ENCODE measurements at regions of chr7 and their contacts with region 1.

Region 1: GRCh38 chr7:2645274-2645868 is 13.6 kb downstream of the TTYH3 start:
- DNase-seq: peak; percentile 89
- H3K4me3 ChIP-seq: peak overlapping the region; percentile 67
- H3K27ac ChIP-seq: peak overlapping the region; percentile 90
- H3K4me1 ChIP-seq: peaks cover 64% of the 10 kb centered on the region
- CTCF ChIP-seq: no peak

Region 2: GRCh38 chr7:1638215-1638661 is 1007.1 kb before region 1 on chr7:
- CTCF ChIA-PET with region 1: no interaction called
- POLR2A ChIA-PET with region 1: no interaction called
- intact Hi-C with region 1: no loop called
- DNase-seq: no peak
- H3K4me3 ChIP-seq: no peak overlapping the region
- H3K27ac ChIP-seq: no peak overlapping the region
- H3K4me1 ChIP-seq: no peaks in the 10 kb centered on the region
- CTCF ChIP-seq: no peak

Region 3: GRCh38 chr7:2555121-2556052 is 90.0 kb before region 1 on chr7 and contains the start of gene BRAT1:
- CTCF ChIA-PET with region 1: no interaction called
- POLR2A ChIA-PET with region 1: interaction called, 4 read pairs
- intact Hi-C with region 1: loop called (anchors 1 kb)
- DNase-seq: peak; percentile 97
- H3K4me3 ChIP-seq: peak within 1 kb of the TSS; percentile 76
- H3K27ac ChIP-seq: peak within 1 kb of the TSS; percentile 82
- H3K4me1 ChIP-seq: peaks cover 44% of the 10 kb centered on the region
- CTCF ChIP-seq: peak; percentile 62
- total RNA-seq, gene BRAT1: 50.8 and 52.0 TPM in 2 replicates

Region 4: DNA sequence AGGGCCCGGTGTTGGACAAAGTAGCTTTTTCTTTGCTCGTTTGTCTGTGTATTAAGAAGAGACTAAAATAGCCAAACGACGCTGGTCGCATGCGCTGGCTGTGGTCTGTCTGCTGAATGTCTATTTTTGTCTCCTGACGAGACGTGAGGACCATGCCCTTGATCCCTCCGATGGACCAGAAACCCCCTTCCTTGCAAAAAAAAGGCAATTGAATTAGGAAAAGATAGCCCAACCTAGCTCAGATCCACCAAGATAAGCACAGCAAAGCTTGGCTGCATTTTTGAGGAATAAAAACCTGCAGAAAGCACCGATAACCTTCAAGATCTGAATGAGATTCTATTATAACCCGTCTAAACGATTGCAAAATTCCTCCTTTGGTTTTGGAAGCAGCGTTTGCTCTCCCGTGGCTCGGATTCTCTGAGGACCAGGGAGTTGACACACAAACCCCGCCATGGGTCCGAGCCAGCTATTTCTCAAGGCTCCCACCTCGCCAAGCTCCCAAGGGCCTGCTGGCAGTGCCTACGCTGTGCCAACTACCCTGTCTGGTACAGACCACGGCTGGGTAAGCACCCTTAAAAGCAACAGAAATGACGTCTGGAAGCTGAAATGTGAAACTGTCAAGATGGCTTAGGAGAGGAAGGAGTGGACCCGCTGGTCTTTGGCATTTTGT is 31.3 kb before region 1 on chr7:
- CTCF ChIA-PET with region 1: no interaction called
- POLR2A ChIA-PET with region 1: interaction called, 3 read pairs
- intact Hi-C with region 1: loop called (anchors 2 kb)
- DNase-seq: peak; percentile 26
- H3K4me3 ChIP-seq: no peak overlapping the region
- H3K27ac ChIP-seq: no peak overlapping the region
- H3K4me1 ChIP-seq: peaks cover 26% of the 10 kb centered on the region
- CTCF ChIP-seq: no peak

Region 5: DNA sequence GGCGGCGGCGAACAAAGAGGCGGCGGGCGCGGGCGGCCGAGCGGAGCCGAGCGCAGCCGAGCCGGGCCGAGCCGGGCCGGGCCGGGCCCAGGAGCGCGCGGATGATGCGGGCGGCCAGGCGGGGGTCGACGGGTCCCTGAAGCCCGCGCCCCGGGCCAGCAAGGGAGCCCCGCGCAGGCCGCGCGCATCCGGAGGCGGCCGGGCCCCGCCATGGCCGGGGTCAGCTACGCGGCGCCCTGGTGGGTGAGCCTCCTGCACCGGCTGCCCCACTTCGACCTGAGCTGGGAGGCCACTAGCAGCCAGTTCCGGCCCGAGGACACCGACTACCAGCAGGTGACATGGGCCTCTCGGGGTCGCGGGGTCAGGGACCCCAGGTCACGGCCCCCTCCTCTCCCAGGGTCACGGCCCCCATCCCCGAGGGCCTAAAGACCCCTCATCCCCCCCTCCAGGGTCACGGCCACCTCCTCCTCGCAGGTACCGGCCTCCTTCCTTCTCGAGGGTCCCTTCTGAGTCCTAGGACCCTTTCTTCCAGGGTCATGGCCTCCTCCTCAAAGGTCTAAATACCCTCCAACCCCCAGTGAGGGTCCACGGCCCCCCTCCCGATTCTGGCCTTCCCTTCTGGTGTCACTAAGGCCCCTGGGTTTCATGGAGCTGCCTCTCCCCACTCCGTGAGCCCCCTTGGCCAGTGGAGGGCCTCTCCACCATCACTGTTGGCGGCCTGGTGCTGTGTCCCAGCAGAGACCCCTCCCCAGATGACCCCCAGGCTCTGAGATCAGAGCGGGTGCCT is 13.2 kb before region 1 on chr7 and contains the start of gene TTYH3:
- CTCF ChIA-PET with region 1: interaction called, 10 read pairs
- POLR2A ChIA-PET with region 1: interaction called, 13 read pairs
- intact Hi-C with region 1: no loop called
- DNase-seq: no peak
- H3K4me3 ChIP-seq: peak within 1 kb of the TSS; percentile 82
- H3K27ac ChIP-seq: no peak within 1 kb of the TSS
- H3K4me1 ChIP-seq: peaks cover 26% of the 10 kb centered on the region
- CTCF ChIP-seq: no peak
- total RNA-seq, gene TTYH3: 17.9 and 23.8 TPM in 2 replicates

Region 6: DNA sequence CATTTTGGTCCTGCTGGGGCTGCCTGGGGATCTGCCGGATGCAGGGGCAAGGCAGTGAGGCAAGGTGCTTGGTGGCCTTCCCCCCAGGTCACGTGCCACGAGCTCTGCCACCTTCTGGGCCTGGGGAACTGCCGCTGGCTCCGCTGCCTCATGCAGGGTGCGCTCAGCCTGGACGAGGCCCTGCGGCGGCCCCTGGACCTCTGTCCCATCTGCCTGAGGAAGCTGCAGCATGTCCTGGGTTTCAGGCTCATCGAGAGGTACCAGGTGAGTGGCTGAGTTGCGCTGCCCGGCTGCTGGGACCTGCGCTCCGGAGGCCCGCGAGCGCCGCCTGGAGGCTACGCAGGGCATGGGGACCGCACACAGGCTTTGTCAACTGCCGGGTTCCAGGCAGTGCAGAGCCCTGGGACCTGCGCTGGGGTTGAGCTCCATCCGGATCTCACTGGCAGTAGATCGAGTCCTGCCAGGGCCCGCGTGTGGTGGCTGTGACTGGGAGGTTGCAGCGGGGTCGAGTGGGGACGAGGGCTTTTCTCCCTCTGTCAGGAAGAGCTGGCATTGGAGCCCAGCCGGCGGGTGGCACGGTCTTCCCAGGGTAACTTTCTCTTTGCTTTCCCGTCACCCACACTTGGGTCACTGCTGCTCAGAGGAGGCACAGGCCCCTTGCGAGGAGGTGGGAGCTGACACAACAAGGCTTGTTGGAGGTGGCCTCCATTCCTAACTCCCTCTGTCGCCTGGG is 64.3 kb after region 1 on chr7:
- CTCF ChIA-PET with region 1: interaction called, 10 read pairs
- POLR2A ChIA-PET with region 1: interaction called, 11 read pairs
- intact Hi-C with region 1: loop called (anchors 2 kb)
- DNase-seq: peak; percentile 92
- H3K4me3 ChIP-seq: peak overlapping the region; percentile 64
- H3K27ac ChIP-seq: peak overlapping the region; percentile 81
- H3K4me1 ChIP-seq: peaks cover 33% of the 10 kb centered on the region
- CTCF ChIP-seq: peak; percentile 97